ENCODE measurements at regions of chr1 and their contacts with region 1.

Region 1: DNA sequence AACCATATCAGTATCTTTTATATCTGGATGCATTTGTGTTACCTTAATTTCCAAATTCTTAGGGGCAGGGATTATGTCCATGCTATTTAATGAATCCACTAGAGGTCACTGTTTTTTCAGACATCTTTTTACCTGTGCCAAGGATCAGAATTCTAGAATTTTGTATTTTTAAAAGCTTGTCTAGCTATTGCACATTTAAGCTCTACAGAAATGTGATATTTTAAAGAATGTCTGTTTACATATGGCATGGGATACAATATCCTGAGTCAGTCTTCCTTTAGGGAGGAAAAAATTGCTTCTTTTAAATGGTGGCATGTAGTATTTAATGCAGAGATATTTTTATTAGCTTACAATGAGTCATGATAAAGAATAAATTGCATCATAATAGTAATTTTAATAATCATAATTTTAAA is 11.3 kb downstream of the RPAP2 start:
- DNase-seq: peak in 1 of 2 experiments; percentile 28
- ATAC-seq: peak in 1 of 2 experiments; percentile 62; a peak in 4 of 6 replicates
- H3K4me3 ChIP-seq: no peak overlapping the region
- H3K27ac ChIP-seq: no peak overlapping the region
- H3K4me1 ChIP-seq: no peaks in the 10 kb centered on the region
- CTCF ChIP-seq: peak; percentile 68
- EP300 ChIP-seq: no peak
- POLR2A ChIP-seq: no peak
- RAD21 ChIP-seq: peak; percentile 57 to 61

Region 2: GRCh38 chr1:92376345-92376744 is 66.2 kb after region 1 on chr1:
- CTCF ChIA-PET with region 1: no interaction called
- POLR2A ChIA-PET with region 1: no interaction called
- DNase-seq: no peak
- ATAC-seq: no peak
- H3K4me3 ChIP-seq: no peak overlapping the region
- H3K27ac ChIP-seq: no peak overlapping the region
- H3K4me1 ChIP-seq: no peaks in the 10 kb centered on the region
- CTCF ChIP-seq: no peak
- EP300 ChIP-seq: no peak
- POLR2A ChIP-seq: no peak
- RAD21 ChIP-seq: no peak

Region 3: DNA sequence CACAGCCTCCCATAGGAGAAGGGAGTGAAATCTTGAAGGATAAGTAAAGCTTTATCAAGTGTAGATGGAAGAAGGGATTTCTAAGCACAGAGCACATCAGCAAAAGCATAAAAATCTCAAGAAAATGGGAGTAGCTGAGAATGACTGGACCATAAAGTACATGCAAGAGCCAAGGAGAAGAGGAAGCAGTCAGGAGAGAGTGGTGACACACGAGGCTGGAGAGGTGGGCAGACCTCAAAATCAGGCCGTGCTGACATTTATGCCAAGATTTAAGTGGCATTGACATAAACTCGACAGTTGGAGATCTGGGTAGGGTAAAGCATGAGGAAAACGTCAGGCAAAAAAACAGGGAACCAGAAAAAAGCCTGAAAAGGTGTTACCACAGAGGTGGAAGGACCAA is 114.2 kb after region 1 on chr1:
- CTCF ChIA-PET with region 1: no interaction called
- POLR2A ChIA-PET with region 1: no interaction called
- DNase-seq: no peak
- ATAC-seq: no peak
- H3K4me3 ChIP-seq: no peak overlapping the region
- H3K27ac ChIP-seq: no peak overlapping the region
- H3K4me1 ChIP-seq: no peaks in the 10 kb centered on the region
- CTCF ChIP-seq: no peak
- EP300 ChIP-seq: no peak
- POLR2A ChIP-seq: no peak
- RAD21 ChIP-seq: no peak

Region 4: GRCh38 chr1:92485381-92486257 is 175.4 kb after region 1 on chr1:
- CTCF ChIA-PET with region 1: interaction called, 11 read pairs
- POLR2A ChIA-PET with region 1: no interaction called
- DNase-seq: peak in 1 of 2 experiments; percentile 53
- ATAC-seq: peak; percentile 59 to 76
- H3K4me3 ChIP-seq: peak overlapping the region; percentile 66
- H3K27ac ChIP-seq: peak overlapping the region; percentile 35 to 73; a peak in 3 of 6 replicates
- H3K4me1 ChIP-seq: peaks cover 28% of the 10 kb centered on the region; the same call in 2 of the 3 replicates
- CTCF ChIP-seq: no peak; the same call in 2 of the 3 replicates
- EP300 ChIP-seq: no peak
- POLR2A ChIP-seq: no peak
- RAD21 ChIP-seq: no peak

Measured in A549 (cell line).